ENCODE measurements at regions of chr6 and their contacts with region 1.

Region 1: DNA sequence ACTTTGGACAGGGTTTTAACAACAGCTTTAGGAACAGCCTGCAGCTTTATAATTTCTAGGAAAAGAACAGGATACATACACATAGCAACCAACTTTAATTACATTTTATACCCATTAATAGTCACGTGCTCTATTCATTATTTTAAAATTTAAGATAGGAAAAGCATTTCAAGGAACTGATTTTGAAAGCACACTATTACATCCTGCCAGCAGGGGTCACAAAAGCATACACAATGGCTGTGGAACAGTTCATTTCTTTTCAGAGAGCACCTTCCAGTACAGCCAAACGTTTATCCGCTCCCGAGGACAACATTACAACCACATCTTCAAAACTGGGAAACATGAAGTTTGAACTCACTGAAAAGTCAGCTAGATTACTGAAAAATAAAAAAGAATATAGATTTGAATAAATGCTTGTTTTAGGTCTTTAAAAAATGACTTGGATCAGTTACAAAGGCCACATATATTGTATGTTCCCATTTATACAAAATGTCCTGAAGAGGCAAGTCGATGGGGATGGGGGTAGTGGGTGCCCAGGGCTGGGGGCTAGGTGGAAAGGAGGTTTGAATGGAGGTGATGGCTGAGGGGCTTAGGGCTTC is 104.6 kb upstream of the EXOC2 start:
- DNase-seq: peak in 1 of 2 experiments; percentile 35
- H3K4me3 ChIP-seq: no peak overlapping the region
- H3K27ac ChIP-seq: no peak overlapping the region
- H3K4me1 ChIP-seq: no peaks in the 10 kb centered on the region
- H3K27me3 ChIP-seq: no peaks in the 10 kb centered on the region
- CTCF ChIP-seq: peak; percentile 84

Region 2: DNA sequence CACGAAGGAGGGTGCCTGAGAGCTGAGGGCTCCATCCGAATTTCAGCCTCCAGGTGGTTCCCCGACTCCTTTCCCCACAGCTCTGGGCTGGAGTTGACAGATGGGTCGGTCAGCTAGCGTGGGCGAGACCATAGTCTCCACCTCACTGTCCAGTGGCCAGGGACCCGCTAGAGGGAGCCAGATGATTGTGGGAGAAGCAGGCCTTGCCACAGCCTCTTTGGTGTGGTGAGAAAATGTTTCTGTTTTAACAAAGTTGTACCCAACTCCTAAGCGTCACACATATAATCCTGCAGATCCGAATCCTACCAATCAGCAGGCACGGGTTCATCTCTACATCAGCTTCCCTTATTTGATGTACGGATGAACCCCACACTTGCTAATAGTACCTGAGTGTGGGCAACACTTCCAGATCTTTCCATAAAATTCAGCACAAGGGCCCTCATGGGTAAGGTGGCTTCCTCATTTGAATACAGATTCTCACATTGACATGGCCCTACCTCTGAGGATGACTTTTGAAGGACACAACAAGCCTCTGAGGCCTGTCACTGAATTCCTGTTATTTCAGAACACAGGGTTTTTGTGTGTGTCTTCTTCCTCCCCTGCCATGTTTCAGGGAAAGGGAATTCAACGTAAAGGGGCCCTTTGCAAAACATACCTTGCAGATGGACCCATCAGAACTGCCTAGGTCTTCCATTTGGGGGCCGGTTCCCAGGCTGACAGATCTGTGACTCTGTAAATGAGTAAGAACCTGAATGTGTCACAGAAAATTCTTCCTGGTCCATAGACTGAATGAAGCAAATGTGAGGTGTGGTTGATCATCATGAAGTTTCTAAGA is 608.5 kb before region 1 on chr6:
- CTCF ChIA-PET with region 1: no interaction called
- POLR2A ChIA-PET with region 1: no interaction called
- intact Hi-C with region 1: loop called (anchors 5 kb)
- DNase-seq: peak; percentile 69 to 86
- H3K4me3 ChIP-seq: no peak overlapping the region
- H3K27ac ChIP-seq: no peak overlapping the region
- H3K4me1 ChIP-seq: no peaks in the 10 kb centered on the region
- H3K27me3 ChIP-seq: peaks cover 12% of the 10 kb centered on the region; the same call in 1 of the 2 replicates
- CTCF ChIP-seq: peak; percentile 75

Region 3: DNA sequence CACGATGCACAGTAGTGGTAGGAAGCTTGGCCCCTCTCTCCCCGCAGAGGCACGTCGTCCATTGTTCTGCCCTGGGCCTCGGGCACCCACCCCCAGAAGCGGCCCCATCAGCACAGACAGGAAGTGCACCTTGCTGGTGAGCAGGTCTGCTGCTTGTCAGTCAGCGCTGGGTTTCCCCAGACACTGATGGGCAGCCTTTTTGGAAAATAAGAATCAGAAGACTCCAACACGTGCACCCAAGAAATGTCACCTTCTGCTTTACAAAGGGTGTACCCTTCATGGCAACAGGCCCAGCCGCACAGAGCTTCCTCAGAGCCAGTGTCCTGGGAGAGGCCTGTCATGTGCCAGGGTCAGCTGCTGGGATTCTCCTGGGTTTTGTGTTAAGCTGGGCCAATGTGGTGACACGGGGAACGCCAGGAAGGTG is 440.7 kb before region 1 on chr6:
- CTCF ChIA-PET with region 1: no interaction called
- POLR2A ChIA-PET with region 1: no interaction called
- intact Hi-C with region 1: no loop called
- DNase-seq: no peak
- H3K4me3 ChIP-seq: no peak overlapping the region
- H3K27ac ChIP-seq: no peak overlapping the region
- H3K4me1 ChIP-seq: no peaks in the 10 kb centered on the region
- H3K27me3 ChIP-seq: peaks cover 98% of the 10 kb centered on the region
- CTCF ChIP-seq: no peak

Region 4: GRCh38 chr6:593139-593906 is 204.3 kb before region 1 on chr6:
- CTCF ChIA-PET with region 1: no interaction called
- POLR2A ChIA-PET with region 1: no interaction called
- intact Hi-C with region 1: loop called (anchors 10 kb)
- DNase-seq: peak; percentile 31 to 48
- H3K4me3 ChIP-seq: no peak overlapping the region
- H3K27ac ChIP-seq: no peak overlapping the region
- H3K4me1 ChIP-seq: no peaks in the 10 kb centered on the region
- H3K27me3 ChIP-seq: no peaks in the 10 kb centered on the region
- CTCF ChIP-seq: peak; percentile 68

Region 5: DNA sequence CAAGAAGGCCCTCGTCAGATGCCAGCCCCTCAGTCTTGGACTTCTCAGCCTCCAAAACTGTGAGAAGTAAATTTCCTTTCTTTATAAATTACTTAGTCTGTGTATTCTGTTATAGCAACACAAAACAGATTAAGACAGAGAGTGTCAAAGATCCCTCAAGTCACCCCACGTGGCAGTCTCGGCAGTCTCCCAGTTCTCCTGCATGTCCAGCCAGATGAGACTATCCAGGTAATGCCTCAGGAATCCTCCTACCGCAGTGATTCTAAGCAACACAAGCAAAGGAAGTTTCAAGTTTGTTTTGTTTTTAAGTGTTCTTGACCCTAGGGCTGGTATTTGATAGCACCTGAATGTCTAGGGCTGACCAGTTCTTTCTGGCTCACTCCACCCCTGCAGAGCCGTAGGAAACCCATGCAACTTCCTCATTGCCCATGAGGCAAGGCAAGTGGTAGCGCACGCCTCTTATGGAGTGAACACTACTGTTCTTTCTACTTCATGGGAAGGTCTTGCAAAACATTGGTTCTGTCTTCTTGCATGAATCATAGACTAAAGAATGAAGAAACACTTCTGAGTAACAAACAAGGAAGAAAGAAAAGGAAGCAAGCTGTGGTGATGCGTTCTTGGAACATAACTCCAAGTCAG is 489.5 kb after region 1 on chr6:
- CTCF ChIA-PET with region 1: no interaction called
- POLR2A ChIA-PET with region 1: no interaction called
- intact Hi-C with region 1: loop called (anchors 1 kb)
- DNase-seq: peak; percentile 87 to 99
- H3K4me3 ChIP-seq: no peak overlapping the region
- H3K27ac ChIP-seq: peak overlapping the region; percentile 86
- H3K4me1 ChIP-seq: peaks cover 38% of the 10 kb centered on the region
- H3K27me3 ChIP-seq: no peaks in the 10 kb centered on the region
- CTCF ChIP-seq: no peak

Region 6: DNA sequence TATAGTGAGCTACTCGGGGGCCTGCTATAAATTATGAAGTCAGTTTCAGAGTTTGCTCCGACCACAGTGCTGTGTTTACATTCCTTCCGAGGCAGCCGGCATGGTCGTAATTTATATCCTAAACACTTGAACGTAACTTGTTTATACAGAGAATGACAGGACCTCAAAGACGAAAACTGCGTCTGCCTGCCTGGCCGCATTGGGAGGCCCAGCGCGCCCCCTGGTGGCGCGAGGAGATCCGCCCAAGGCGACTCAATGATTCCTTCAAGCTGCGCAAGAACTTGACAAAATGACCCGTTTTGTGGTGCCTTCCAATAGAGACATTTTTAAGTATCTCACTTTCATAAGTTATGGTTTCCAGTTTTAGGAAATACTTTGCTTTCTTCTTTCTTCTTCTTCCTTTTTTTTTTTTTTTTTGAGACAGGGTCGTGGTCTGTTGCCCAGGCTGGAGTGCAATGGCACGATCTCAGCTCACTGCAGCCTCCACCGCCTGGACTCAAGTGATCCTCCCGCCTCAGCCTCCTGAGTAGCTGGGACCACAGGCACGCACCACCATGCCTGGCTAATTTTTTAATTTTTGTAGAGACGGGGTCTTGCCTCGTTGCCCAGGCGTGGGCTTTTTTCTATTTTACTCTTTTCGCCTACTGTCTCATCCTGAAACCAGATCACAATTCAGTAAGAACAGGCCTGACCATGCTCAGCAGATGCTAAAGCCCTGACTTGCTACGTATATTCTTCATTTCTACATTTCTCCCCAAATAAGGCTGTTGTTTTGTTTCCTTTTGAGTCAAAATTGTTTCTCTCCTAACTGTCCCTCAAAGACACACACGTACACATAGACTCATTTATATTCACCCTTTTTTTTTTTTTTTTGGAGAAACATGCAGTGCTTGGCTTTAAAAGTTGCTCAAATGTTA is 599.6 kb after region 1 on chr6:
- CTCF ChIA-PET with region 1: no interaction called
- POLR2A ChIA-PET with region 1: no interaction called
- intact Hi-C with region 1: loop called (anchors 1 kb)
- DNase-seq: peak; percentile 45 to 67
- H3K4me3 ChIP-seq: no peak overlapping the region
- H3K27ac ChIP-seq: no peak overlapping the region
- H3K4me1 ChIP-seq: 0 out of 2 replicates have a peak, but pooled peaks cover 4% of the 10 kb centered on the region
- H3K27me3 ChIP-seq: no peaks in the 10 kb centered on the region
- CTCF ChIP-seq: peak; percentile 88